ENCODE measurements at regions of chr10 and their contacts with region 1.

Region 1: GRCh38 chr10:58531084-58531695 is 18.5 kb downstream of the BICC1 start:
- DNase-seq: peak; percentile 90
- H3K4me3 Mint-ChIP-seq: peak overlapping the region; percentile 50
- H3K27ac Mint-ChIP-seq: peak overlapping the region; percentile 66
- H3K4me1 Mint-ChIP-seq: peaks cover 53% of the 10 kb centered on the region
- H3K27me3 Mint-ChIP-seq: no peaks in the 10 kb centered on the region
- CTCF ChIP-seq: peak; percentile 91

Region 2: GRCh38 chr10:58023341-58024073 is 507.7 kb before region 1 on chr10:
- CTCF ChIA-PET with region 1: no interaction called
- intact Hi-C with region 1: no loop called
- DNase-seq: peak; percentile 52
- H3K4me3 Mint-ChIP-seq: peak overlapping the region; percentile 4
- H3K27ac Mint-ChIP-seq: peak overlapping the region; percentile 84
- H3K4me1 Mint-ChIP-seq: peaks cover 34% of the 10 kb centered on the region
- H3K27me3 Mint-ChIP-seq: no peaks in the 10 kb centered on the region
- CTCF ChIP-seq: no peak

Region 3: DNA sequence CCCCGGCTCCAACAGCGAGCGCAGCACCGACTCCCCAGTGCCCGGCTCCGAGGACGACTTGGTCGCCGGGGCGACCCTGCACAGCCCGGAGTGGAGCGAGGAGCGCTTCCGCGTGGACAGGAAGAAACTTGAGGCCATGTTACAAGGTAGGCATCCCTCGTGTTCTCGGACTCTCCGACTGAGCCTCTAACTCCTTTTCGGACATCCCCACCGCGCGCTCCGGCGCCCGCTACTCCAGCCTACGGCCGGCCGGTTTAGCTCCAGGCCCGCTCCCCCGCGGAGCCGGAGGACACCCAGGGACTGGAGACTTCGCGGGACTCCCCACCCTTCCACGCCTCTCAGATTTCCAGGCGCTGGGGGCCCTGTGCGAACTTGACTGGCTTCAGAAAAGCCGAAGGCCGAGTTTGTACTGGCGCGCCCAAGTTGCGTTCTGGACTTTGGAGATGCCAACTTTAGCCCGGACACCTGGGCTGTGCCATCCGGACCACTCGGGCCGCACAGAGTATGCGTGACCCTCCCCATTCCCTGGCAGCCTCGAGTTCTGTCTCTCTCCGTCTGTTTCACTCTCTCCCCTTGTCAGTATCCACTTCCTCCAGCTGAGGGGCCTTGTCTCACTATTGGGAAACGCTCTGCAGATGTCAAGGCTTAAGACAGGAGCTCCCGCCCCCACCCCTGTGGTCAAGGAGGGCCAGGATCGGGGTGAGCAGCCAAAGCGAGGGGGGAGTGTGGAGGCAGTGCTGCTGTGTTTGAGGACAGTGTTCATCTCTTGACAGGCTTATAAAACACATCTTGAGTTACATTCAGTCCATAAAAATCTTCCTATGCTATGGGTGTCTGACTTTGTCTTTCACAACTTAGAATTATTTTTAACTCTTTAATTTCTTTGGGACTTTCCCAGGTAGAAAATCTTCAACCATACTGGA is 17.7 kb before region 1 on chr10:
- CTCF ChIA-PET with region 1: interaction called, 19 read pairs
- intact Hi-C with region 1: no loop called
- DNase-seq: peak; percentile 82
- H3K4me3 Mint-ChIP-seq: peak overlapping the region; percentile 77
- H3K27ac Mint-ChIP-seq: peak overlapping the region; percentile 76
- H3K4me1 Mint-ChIP-seq: peaks cover 33% of the 10 kb centered on the region
- H3K27me3 Mint-ChIP-seq: no peaks in the 10 kb centered on the region
- CTCF ChIP-seq: no peak

Region 4: DNA sequence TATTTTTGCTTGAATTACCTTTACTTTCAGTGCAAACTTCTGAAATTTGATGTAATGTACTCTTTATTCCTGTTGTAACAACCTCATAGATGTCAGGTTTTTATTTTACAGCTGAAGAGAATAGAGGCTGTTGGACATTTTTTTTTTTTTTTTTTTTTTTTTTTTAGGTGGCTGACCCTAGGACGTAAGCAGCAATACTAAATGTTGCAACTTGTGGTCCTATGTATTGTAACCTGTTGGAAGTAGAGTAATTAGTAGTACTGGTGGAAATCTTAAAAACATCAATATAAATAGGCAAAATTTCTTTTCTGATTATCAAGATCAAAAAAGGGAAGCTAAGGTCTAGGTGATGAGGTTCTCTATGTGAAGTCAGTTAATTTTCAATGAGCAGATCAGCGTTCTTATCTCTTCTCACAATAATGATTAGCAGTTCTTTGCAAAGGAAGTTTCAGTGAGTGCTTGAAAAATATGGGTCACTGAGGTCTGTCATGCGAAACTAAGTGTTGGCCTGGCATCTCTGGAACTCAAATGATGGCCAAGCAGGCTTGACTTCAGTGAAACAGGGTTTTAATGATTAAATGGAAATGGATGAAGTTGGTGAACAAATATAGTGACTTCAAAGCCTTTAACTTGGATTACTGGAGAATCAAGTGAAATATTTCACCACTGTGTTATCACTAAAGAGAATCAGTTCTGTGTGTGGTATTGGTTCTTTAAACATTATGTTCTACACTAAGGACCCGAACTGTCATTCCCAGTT is 24.2 kb after region 1 on chr10:
- CTCF ChIA-PET with region 1: interaction called, 6 read pairs
- intact Hi-C with region 1: loop called (anchors 2 kb)
- DNase-seq: peak; percentile 51
- H3K4me3 Mint-ChIP-seq: peak overlapping the region; percentile 22
- H3K27ac Mint-ChIP-seq: peak overlapping the region; percentile 89
- H3K4me1 Mint-ChIP-seq: peaks cover 66% of the 10 kb centered on the region
- H3K27me3 Mint-ChIP-seq: no peaks in the 10 kb centered on the region
- CTCF ChIP-seq: no peak

Region 5: GRCh38 chr10:58641095-58641531 is 109.9 kb after region 1 on chr10:
- CTCF ChIA-PET with region 1: interaction called, 19 read pairs
- intact Hi-C with region 1: loop called (anchors 1 kb)
- DNase-seq: peak; percentile 46
- H3K4me3 Mint-ChIP-seq: peak overlapping the region; percentile 29
- H3K27ac Mint-ChIP-seq: peak overlapping the region; percentile 43
- H3K4me1 Mint-ChIP-seq: peaks cover 78% of the 10 kb centered on the region
- H3K27me3 Mint-ChIP-seq: no peaks in the 10 kb centered on the region
- CTCF ChIP-seq: no peak

Region 6: GRCh38 chr10:58755677-58756076 is 224.5 kb after region 1 on chr10:
- CTCF ChIA-PET with region 1: no interaction called
- intact Hi-C with region 1: loop called (anchors 5 kb)
- DNase-seq: peak; percentile 49
- H3K4me3 Mint-ChIP-seq: peak overlapping the region; percentile 60
- H3K27ac Mint-ChIP-seq: peak overlapping the region; percentile 35
- H3K4me1 Mint-ChIP-seq: peaks cover 53% of the 10 kb centered on the region
- H3K27me3 Mint-ChIP-seq: no peaks in the 10 kb centered on the region
- CTCF ChIP-seq: no peak

Region 7: DNA sequence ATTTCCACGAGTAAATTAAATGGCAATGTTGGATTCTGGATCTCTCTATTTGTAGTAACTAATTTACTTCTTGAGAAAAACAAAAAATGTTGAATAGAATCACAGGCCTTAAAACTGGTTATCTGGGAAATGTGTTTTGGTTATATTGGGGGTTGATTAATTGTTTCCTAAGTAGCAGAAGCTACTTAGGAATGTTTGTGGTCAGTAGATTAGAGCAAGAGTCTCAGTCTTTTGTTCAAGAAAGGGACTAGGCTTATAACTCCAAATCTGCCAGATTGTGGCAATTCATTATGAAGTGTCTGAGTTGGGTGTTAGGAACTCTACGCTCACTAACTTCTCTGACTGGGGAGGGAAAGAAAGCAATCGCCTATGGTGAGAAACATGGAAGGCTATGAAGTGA is 400.9 kb after region 1 on chr10:
- CTCF ChIA-PET with region 1: no interaction called
- intact Hi-C with region 1: loop called (anchors 10 kb)
- DNase-seq: no peak
- H3K4me3 Mint-ChIP-seq: no peak overlapping the region
- H3K27ac Mint-ChIP-seq: no peak overlapping the region
- H3K4me1 Mint-ChIP-seq: no peaks in the 10 kb centered on the region
- H3K27me3 Mint-ChIP-seq: peaks cover 44% of the 10 kb centered on the region
- CTCF ChIP-seq: no peak

Region 8: GRCh38 chr10:59255463-59255862 is 724.3 kb after region 1 on chr10:
- CTCF ChIA-PET with region 1: no interaction called
- intact Hi-C with region 1: no loop called
- DNase-seq: no peak
- H3K4me3 Mint-ChIP-seq: no peak overlapping the region
- H3K27ac Mint-ChIP-seq: no peak overlapping the region
- H3K4me1 Mint-ChIP-seq: no peaks in the 10 kb centered on the region
- H3K27me3 Mint-ChIP-seq: peaks cover 55% of the 10 kb centered on the region
- CTCF ChIP-seq: no peak